Ovary (tissue), 10 donors: ENCODE measurements at regions of chr3 and their contacts with region 1.

Region 1: GRCh38 chr3:196684548-196685407 is 27.3 kb downstream of the CEP19 start:
- DNase-seq: peak; percentile 20 to 66 (median 56)
- H3K4me3 ChIP-seq: no peak overlapping the region
- H3K27ac ChIP-seq: no peak overlapping the region
- H3K4me1 ChIP-seq: no peaks in the 10 kb centered on the region
- H3K27me3 ChIP-seq: no peaks in the 10 kb centered on the region
- CTCF ChIP-seq: peak; percentile 68 to 83 (median 69)
- EP300 ChIP-seq: no peak
- POLR2A ChIP-seq: no peak

Region 2: GRCh38 chr3:196251918-196252317 is 432.9 kb before region 1 on chr3:
- intact Hi-C with region 1: loop called (anchors 5 to 10 kb)
- DNase-seq: no peak
- H3K4me3 ChIP-seq: no peak overlapping the region
- H3K27ac ChIP-seq: no peak overlapping the region
- H3K4me1 ChIP-seq: no peaks in the 10 kb centered on the region
- H3K27me3 ChIP-seq: no peaks in the 10 kb centered on the region
- CTCF ChIP-seq: no peak
- EP300 ChIP-seq: no peak
- POLR2A ChIP-seq: no peak

Region 3: GRCh38 chr3:196609343-196609775 is 75.4 kb before region 1 on chr3:
- intact Hi-C with region 1: loop called in 1 of 4 experiments (anchors 10 kb)
- DNase-seq: peak; percentile 33 to 68 (median 59)
- H3K4me3 ChIP-seq: no peak overlapping the region
- H3K27ac ChIP-seq: no peak overlapping the region
- H3K4me1 ChIP-seq: no peaks in the 10 kb centered on the region
- H3K27me3 ChIP-seq: no peaks in the 10 kb centered on the region
- CTCF ChIP-seq: no peak
- EP300 ChIP-seq: no peak
- POLR2A ChIP-seq: no peak